Dendritic cell treated with granulocyte-macrophage colony-stimulating factor and Interleukin-4, amounts not matched to agents 40 ng/mL and 50 ng/mL, for 4 days (primary cell): ENCODE measurements at regions of chr12 and their contacts with region 1.

Region 1: DNA sequence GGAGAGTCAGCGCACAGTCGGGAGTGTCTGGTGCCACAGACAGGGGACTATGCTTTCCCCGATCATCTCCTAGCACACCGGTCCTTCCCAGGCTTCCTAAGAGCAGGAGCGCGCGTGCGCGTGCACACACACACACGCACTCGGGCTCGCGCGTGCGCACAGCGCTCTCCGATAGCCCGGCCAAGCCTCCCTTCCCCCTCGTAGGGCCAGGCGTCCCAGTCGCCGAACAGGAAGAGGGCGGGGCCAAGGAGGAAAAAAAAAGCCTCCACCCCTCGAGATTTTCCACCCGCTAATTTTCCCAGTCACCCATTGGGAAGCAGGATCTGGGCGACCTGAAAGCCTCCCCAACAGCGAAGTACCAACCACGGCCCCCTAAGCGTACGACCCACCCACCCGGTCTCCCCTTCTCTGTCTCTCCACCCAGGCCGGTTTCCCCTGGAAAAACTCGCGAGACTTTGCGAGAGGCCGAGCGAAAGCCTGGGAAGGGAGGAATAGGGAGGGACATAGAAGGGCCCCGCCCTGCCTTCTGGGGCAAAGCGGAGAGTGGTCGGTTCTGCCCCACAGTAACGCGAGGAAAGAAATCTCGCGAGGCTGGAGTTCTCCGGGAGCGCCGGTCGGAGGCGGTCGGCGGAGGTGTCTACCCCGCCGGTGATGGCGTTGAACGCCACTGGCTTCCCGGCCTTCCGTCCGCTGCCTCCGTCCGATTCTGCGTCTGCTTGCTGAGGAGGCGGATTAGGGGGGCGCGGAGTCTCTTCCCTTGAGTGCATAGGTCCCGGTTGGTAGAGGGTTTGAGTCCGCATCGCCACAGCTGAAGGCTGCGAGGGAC is at the starts of genes FGFR1OP2 and INTS13:
- H3K4me3 Mint-ChIP-seq: peak within 1 kb of the TSS; percentile 96
- H3K27ac Mint-ChIP-seq: peak within 1 kb of the TSS; percentile 99
- H3K4me1 Mint-ChIP-seq: peaks cover 42% of the 10 kb centered on the region
- H3K27me3 Mint-ChIP-seq: no peaks in the 10 kb centered on the region

Region 2: GRCh38 chr12:26798023-26798422 is 140.1 kb before region 1 on chr12:
- intact Hi-C with region 1: no loop called
- H3K4me3 Mint-ChIP-seq: peak overlapping the region; percentile 15
- H3K27ac Mint-ChIP-seq: peak overlapping the region; percentile 75
- H3K4me1 Mint-ChIP-seq: peaks cover 44% of the 10 kb centered on the region
- H3K27me3 Mint-ChIP-seq: no peaks in the 10 kb centered on the region

Region 3: GRCh38 chr12:26953447-26953846 is 15.4 kb after region 1 on chr12:
- intact Hi-C with region 1: loop called (anchors 2 kb)
- H3K4me3 Mint-ChIP-seq: no peak overlapping the region
- H3K27ac Mint-ChIP-seq: peak overlapping the region; percentile 88
- H3K4me1 Mint-ChIP-seq: peaks cover 9% of the 10 kb centered on the region
- H3K27me3 Mint-ChIP-seq: no peaks in the 10 kb centered on the region